Dendritic cell treated with granulocyte-macrophage colony-stimulating factor and Interleukin-4, amounts not matched to agents 40 ng/mL and 50 ng/mL, for 4 days (primary cell): ENCODE measurements at regions of chr4 and their contacts with region 1.

Region 1: GRCh38 chr4:158729716-158730559 is 6.7 kb upstream of the PPID start:
- H3K4me3 Mint-ChIP-seq: no peak overlapping the region
- H3K27ac Mint-ChIP-seq: no peak overlapping the region
- H3K4me1 Mint-ChIP-seq: no peaks in the 10 kb centered on the region
- H3K27me3 Mint-ChIP-seq: peaks cover 16% of the 10 kb centered on the region

Region 2: GRCh38 chr4:158644760-158645159 is 85.2 kb before region 1 on chr4:
- intact Hi-C with region 1: no loop called
- H3K4me3 Mint-ChIP-seq: no peak overlapping the region
- H3K27ac Mint-ChIP-seq: no peak overlapping the region
- H3K4me1 Mint-ChIP-seq: no peaks in the 10 kb centered on the region
- H3K27me3 Mint-ChIP-seq: no peaks in the 10 kb centered on the region

Region 3: DNA sequence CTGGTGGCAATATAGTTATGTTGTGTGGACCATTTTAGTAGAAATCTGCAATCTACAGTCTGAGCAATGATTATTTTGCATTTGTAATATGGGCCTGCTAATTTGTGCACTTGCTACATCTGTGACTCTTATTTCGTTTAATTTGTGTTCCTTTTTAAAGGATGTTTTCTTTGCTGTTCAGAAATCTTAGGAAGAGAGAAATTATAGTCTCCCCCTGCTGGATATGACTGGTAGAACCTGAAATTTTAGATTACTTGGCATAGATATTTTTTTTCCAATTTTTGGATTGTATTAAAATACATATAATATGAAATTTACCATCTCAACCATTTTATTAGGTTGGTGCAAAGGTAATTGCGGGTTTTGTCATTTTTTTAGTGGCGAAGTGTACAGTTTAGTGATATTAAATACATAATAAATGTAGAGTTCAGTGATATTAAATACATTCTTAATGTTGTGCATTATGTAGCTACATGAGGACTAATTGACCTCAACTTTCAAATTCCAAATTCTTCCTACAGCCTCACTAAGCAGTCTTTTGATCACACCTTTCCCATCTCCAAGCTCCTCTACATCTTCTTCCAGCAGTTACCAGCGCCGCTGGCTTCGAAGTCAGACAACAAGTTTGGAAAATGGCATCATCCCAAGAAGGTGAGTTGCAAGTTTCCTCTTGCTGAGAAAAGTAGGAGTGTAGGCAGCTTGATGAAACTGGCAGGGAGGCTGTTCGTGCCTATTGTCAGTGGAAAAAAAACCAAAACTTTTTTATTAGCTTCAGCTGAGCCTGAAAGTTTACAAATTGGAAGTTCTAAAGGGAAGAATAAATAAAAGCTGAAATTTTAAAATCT is 121.1 kb after region 1 on chr4:
- intact Hi-C with region 1: loop called (anchors 1 kb)
- H3K4me3 Mint-ChIP-seq: no peak overlapping the region
- H3K27ac Mint-ChIP-seq: peak overlapping the region; percentile 36
- H3K4me1 Mint-ChIP-seq: peaks cover 20% of the 10 kb centered on the region
- H3K27me3 Mint-ChIP-seq: no peaks in the 10 kb centered on the region

Region 4: DNA sequence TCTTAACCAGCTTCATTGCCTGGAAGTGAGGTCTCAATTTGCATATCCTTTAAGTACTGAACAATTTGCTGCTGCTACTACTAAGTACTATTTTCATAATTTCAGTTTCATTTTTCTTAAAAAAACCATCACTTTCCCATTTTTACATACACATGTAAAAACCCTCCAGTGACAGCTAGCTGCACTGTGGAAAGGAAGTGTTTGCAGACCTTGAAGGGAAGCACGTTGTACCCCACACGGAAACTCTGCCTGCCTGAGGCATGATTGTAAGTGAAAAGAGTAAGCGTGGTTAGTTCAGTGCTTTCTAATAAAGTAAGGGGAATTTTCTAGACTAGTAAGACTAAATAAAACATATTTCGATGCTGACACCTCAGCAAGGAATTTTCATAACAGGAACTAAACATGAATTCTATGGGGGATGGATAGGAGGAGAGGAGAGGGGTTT is 476.5 kb after region 1 on chr4:
- intact Hi-C with region 1: loop called (anchors 2 kb)
- H3K4me3 Mint-ChIP-seq: peak overlapping the region; percentile 15
- H3K27ac Mint-ChIP-seq: peak overlapping the region; percentile 71
- H3K4me1 Mint-ChIP-seq: peaks cover 47% of the 10 kb centered on the region
- H3K27me3 Mint-ChIP-seq: no peaks in the 10 kb centered on the region